Colonic mucosa (tissue), 4 donors: ENCODE measurements at regions of chr4 and their contacts with region 1.

Region 1: GRCh38 chr4:184100297-184100885 is 117.3 kb downstream of the ENPP6 start:
- DNase-seq: peak; percentile 60
- H3K4me3 ChIP-seq: no peak overlapping the region
- H3K27ac ChIP-seq: no peak overlapping the region
- H3K4me1 ChIP-seq: no peaks in the 10 kb centered on the region
- H3K27me3 ChIP-seq: no peaks in the 10 kb centered on the region
- CTCF ChIP-seq: peak; percentile 52

Region 2: DNA sequence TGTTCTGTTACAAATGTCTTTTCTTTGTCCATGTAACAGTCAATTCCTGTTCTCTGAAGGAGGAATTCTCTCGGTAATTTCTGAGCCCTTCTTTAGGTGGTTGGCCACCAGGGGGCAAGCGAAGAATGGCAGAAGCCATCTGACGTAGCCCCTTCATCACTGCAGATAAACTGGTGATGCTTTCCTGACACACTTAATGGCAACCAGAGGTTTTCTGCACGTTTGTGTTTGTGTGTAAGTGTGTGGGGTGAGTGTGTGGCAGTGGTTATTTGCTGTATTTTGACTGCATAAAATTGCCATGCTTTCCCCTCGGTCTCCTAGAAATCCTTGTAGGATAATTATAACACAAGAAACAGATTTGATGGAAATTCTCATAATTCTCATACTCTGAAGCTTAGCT is 260.1 kb before region 1 on chr4:
- intact Hi-C with region 1: loop called (anchors 2 kb)
- DNase-seq: peak; percentile 75
- H3K4me3 ChIP-seq: no peak overlapping the region
- H3K27ac ChIP-seq: no peak overlapping the region
- H3K4me1 ChIP-seq: no peaks in the 10 kb centered on the region
- H3K27me3 ChIP-seq: no peaks in the 10 kb centered on the region
- CTCF ChIP-seq: peak; percentile 89

Region 3: DNA sequence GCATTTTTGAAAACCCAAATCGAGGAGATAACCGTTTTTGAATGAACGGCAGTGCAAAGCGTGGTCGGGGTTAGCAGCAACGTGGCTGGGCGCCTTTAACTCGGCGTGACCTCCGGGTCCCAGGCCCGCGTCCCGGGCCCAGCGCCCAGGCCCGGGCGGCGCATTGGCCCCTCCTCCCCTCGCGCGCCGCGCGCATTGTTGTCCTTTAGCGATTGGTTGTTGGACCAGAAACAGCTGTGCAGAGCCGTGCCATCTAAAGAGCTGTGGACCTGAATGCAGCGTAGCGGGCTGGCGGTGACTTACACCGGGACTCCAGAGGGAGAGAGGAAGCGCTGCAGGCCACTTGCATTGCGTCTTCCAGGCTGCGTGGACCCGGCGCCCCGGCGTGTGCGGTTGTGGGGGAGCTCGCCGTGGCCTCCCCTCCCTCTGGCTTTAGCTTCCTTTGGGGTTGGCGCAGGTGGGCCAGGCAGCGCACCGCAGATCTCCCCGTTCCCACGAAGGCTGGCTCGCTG is 195.3 kb before region 1 on chr4 and contains the start of gene STOX2:
- intact Hi-C with region 1: no loop called
- DNase-seq: peak; percentile 56
- H3K4me3 ChIP-seq: peak within 1 kb of the TSS; percentile 52
- H3K27ac ChIP-seq: peak within 1 kb of the TSS; percentile 22
- H3K4me1 ChIP-seq: no peaks in the 10 kb centered on the region
- H3K27me3 ChIP-seq: peaks cover 31% of the 10 kb centered on the region
- CTCF ChIP-seq: no peak
- total RNA-seq, gene STOX2: 0.89 to 2.5 TPM

Region 4: GRCh38 chr4:184163813-184164212 is 63.4 kb after region 1 on chr4:
- intact Hi-C with region 1: loop called (anchors 5 kb)
- DNase-seq: peak; percentile 33
- H3K4me3 ChIP-seq: no peak overlapping the region
- H3K27ac ChIP-seq: no peak overlapping the region
- H3K4me1 ChIP-seq: no peaks in the 10 kb centered on the region
- H3K27me3 ChIP-seq: peaks cover 4% of the 10 kb centered on the region
- CTCF ChIP-seq: peak; percentile 42